ENCODE measurements at regions of chr17 and their contacts with region 1.

Region 1: GRCh38 chr17:74089869-74090464 is 113.5 kb upstream of the RPL38 start:
- DNase-seq: peak; percentile 87
- H3K4me3 Mint-ChIP-seq: no peak overlapping the region
- H3K27ac Mint-ChIP-seq: no peak overlapping the region
- H3K4me1 Mint-ChIP-seq: no peaks in the 10 kb centered on the region
- H3K27me3 Mint-ChIP-seq: peaks cover 100% of the 10 kb centered on the region
- CTCF ChIP-seq: peak; percentile 52

Region 2: GRCh38 chr17:74176546-74177001 is 86.6 kb after region 1 on chr17:
- CTCF ChIA-PET with region 1: interaction called, 10 read pairs
- intact Hi-C with region 1: loop called (anchors 1 kb)
- DNase-seq: peak; percentile 75
- H3K4me3 Mint-ChIP-seq: no peak overlapping the region
- H3K27ac Mint-ChIP-seq: no peak overlapping the region
- H3K4me1 Mint-ChIP-seq: no peaks in the 10 kb centered on the region
- H3K27me3 Mint-ChIP-seq: peaks cover 98% of the 10 kb centered on the region
- CTCF ChIP-seq: peak; percentile 78

Region 3: DNA sequence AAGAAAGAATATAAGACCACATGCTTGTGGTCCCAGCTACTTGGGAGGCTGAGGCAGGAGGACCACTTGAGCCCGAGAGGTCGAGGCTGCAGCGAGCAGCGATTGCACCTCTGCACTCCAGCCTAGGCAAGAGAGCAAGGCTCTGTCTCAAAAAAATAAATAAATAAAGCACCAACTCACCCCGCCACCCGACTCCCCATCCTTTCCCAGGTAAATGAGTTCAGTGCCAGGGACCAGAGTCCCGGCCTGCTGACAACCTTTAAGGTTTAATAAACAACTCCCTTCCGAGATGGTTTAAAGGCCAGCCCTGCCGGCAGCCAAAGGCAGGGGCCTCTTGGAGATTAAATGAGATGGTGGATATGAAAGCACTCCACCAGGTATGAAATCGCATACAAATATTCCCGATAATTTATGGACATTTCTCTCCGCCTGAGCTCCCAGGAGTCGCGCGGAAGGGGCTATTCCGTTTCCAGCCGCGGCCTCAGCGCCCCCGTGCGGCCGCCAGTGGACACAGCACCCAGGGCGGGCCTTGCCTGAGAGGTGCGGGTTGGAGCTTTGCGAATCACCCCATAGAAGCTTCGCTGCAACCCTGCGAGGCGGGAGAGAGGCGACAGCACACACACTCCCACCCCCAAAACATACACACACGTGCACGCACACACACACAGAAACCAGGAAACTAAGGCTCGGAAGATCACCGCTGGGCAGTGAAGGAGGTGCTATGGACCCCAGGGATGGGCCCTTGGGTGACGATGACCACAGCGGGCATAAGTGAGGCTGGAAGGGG is 109.5 kb after region 1 on chr17:
- CTCF ChIA-PET with region 1: interaction called, 21 read pairs
- intact Hi-C with region 1: no loop called
- DNase-seq: peak; percentile 84
- H3K4me3 Mint-ChIP-seq: peak overlapping the region; percentile 33
- H3K27ac Mint-ChIP-seq: no peak overlapping the region
- H3K4me1 Mint-ChIP-seq: peaks cover 9% of the 10 kb centered on the region
- H3K27me3 Mint-ChIP-seq: peaks cover 91% of the 10 kb centered on the region
- CTCF ChIP-seq: peak; percentile 96